GM12878 (cell line): ENCODE measurements at regions of chr7 and their contacts with region 1.

Region 1: DNA sequence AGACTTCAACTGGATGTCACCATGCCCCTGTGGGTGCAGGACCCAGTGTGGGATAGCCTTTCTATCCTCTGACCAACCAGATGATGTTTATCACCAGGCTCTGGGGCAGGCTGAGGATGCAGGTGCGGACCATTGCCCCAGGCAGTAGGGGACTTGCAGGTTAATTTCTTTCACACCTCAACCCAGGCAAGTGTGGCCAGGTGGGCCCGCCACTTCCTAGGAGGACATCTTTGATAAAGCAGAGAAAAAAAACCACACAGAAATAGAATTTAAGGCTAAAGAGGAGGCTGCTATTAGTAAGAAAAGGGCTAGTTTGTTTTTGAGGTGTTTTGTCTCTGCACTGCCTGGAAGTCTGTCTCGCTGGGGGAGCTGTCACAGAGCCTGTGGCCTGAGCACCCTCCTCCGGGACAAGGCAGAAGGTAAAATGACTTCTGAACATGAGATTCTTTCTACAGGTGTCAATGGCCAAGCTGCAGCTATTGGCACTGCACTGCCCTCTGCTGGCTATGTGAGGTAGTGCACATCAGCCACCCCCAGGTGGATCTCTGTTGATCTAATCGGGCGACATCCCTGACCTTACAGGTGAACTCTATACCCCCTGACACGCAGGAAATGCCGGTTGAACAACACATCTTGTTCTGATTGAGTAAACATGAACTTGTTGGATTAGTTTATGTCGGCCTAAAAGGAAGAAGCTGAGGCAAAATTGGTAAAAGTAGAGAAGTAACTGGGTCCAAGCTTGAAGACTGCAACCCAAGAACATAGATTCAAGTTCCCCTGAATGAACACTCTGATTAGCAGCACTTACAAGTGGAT is 21.0 kb downstream of the UPP1 start:
- DNase-seq: peak; percentile 46
- ATAC-seq: peak; percentile 97
- H3K4me3 ChIP-seq: no peak overlapping the region
- H3K27ac ChIP-seq: no peak overlapping the region
- H3K4me1 ChIP-seq: no peaks in the 10 kb centered on the region
- H3K27me3 ChIP-seq: no peaks in the 10 kb centered on the region
- CTCF ChIP-seq: peak; percentile 96 to 99 (median 98)
- EP300 ChIP-seq: no peak
- POLR2A ChIP-seq: no peak
- RAD21 ChIP-seq: peak; percentile 99

Region 2: DNA sequence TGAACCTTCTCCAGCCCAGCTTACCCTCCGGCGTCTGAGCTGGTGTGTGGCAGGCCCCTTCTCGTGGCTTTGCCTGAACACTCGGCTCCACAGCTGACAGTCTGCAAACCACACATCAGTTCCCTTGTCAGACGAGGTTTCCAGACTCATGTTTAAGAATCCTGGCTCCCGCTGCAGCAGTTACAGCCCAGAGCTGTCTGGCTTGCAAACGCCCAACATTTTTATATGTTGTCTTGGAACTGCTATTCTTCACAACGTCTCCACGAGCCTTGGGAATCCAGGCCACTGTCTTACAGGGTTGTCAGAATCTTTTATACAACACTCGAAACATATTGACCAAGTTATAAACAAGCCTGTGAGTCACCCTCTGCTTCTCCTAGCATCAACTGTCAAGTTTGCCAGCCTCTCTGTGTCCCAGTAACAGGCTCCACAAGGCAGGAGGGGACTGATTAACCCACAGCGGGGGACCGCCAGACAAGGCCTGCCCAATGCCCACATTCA is 596.3 kb before region 1 on chr7:
- CTCF ChIA-PET with region 1: no interaction called
- POLR2A ChIA-PET with region 1: no interaction called
- RAD21 ChIA-PET with region 1: no interaction called
- SMC1A ChIA-PET with region 1: no interaction called
- in situ Hi-C with region 1: no loop called
- intact Hi-C with region 1: no loop called
- DNase-seq: no peak
- ATAC-seq: no peak
- H3K4me3 ChIP-seq: no peak overlapping the region
- H3K27ac ChIP-seq: no peak overlapping the region
- H3K4me1 ChIP-seq: no peaks in the 10 kb centered on the region
- H3K27me3 ChIP-seq: no peaks in the 10 kb centered on the region; a peak in 1 of 4 replicates
- CTCF ChIP-seq: no peak
- EP300 ChIP-seq: no peak
- POLR2A ChIP-seq: no peak
- RAD21 ChIP-seq: no peak

Region 3: DNA sequence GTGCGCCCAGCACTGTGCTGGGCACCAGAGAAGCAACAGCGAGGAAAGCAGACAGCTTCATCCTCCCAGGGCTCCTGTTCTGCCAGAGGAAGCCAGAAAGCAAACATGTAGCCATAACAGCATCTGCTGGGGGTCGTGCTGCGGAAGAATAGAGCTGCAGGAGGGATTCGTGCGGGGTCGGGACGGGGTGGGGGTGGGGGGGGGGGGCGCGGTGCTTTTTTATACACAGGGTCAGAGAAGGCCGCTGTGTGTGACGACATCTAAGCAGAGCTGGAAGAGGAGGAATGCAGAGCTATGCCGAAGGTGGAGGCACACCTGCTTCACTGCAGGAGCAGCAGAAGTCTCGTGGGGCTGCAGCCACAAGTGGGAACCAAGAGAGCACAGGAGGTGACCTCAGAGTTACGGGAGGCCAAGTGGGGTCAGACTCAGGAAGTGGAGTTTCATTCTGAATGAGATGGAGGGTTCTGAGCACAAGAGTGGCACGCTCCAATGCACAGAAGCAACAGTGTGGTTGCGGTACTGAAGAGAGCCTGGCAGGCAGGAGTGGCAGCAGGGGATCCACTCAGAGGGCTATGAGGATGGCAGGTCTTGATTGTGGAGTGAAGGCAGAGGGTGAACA is 172.9 kb before region 1 on chr7:
- CTCF ChIA-PET with region 1: interaction called, 8 read pairs
- POLR2A ChIA-PET with region 1: no interaction called
- RAD21 ChIA-PET with region 1: interaction called, 3 read pairs
- SMC1A ChIA-PET with region 1: interaction called, 5 read pairs
- in situ Hi-C with region 1: loop called (anchors 5 kb)
- intact Hi-C with region 1: no loop called
- DNase-seq: peak; percentile 91
- ATAC-seq: peak; percentile 98
- H3K4me3 ChIP-seq: peak overlapping the region; percentile 9; the same call in 1 of the 2 replicates
- H3K27ac ChIP-seq: peak overlapping the region; percentile 68
- H3K4me1 ChIP-seq: peaks cover 28% of the 10 kb centered on the region
- H3K27me3 ChIP-seq: peaks cover 0 to 1% of the 10 kb centered on the region in 2 experiments; a peak in 2 of 4 replicates
- CTCF ChIP-seq: no peak
- EP300 ChIP-seq: peak; percentile 94 to 98
- POLR2A ChIP-seq: peak; percentile 58; the same call in 1 of the 2 replicates
- RAD21 ChIP-seq: no peak

Region 4: GRCh38 chr7:47991741-47992311 is 118.2 kb before region 1 on chr7:
- CTCF ChIA-PET with region 1: interaction called, 210 read pairs
- POLR2A ChIA-PET with region 1: interaction called, 7 read pairs
- RAD21 ChIA-PET with region 1: interaction called, 79 read pairs
- SMC1A ChIA-PET with region 1: interaction called, 41 read pairs
- in situ Hi-C with region 1: loop called (anchors 5 kb)
- intact Hi-C with region 1: loop called (anchors 1 kb)
- DNase-seq: peak; percentile 39
- ATAC-seq: peak; percentile 100
- H3K4me3 ChIP-seq: peak overlapping the region; percentile 67; the same call in 1 of the 2 replicates
- H3K27ac ChIP-seq: no peak overlapping the region
- H3K4me1 ChIP-seq: peaks cover 5% of the 10 kb centered on the region; the same call in 1 of the 2 replicates
- H3K27me3 ChIP-seq: no peaks in the 10 kb centered on the region
- CTCF ChIP-seq: peak; percentile 76 to 91 (median 82)
- EP300 ChIP-seq: no peak
- POLR2A ChIP-seq: peak; percentile 72
- RAD21 ChIP-seq: peak; percentile 80

Region 5: DNA sequence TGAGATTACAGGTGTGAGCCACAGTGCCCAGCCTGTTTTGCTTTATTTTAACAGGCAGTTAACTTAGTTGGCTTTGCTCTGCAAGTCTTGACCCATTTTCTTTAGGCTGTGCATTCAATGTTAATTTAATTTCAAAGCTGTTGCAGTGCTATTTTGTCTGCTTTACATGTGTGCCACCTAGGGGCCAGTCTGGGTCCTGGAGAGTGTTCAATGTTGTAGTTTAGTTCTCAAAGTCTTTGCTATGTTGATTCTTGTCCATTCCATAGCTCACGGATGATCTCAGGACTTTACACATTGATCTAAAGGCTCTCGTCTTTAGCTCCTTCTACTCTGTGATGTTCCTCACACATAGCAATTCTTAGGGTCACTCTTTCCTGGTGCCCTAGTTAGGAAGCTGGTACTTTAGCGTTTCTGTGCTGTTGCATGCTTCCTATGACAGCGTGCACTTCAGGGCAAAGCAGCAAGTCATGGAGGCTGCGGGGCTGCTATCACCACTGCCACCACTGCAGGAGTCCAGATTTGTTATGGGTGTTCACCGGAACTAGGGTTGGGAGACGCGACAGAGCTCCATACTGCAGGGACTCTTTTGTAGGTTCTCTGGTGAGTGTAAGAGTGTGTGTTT is 44.8 kb after region 1 on chr7:
- CTCF ChIA-PET with region 1: interaction called, 4 read pairs
- POLR2A ChIA-PET with region 1: no interaction called
- RAD21 ChIA-PET with region 1: interaction called, 5 read pairs
- SMC1A ChIA-PET with region 1: no interaction called
- in situ Hi-C with region 1: no loop called
- intact Hi-C with region 1: loop called (anchors 2 kb)
- DNase-seq: no peak
- ATAC-seq: peak; percentile 87
- H3K4me3 ChIP-seq: no peak overlapping the region
- H3K27ac ChIP-seq: no peak overlapping the region
- H3K4me1 ChIP-seq: no peaks in the 10 kb centered on the region
- H3K27me3 ChIP-seq: no peaks in the 10 kb centered on the region; a peak in 2 of 4 replicates
- CTCF ChIP-seq: peak; percentile 56 to 63 (median 61); a peak in 5 of 6 replicates
- EP300 ChIP-seq: no peak
- POLR2A ChIP-seq: no peak
- RAD21 ChIP-seq: peak; percentile 75

Region 6: DNA sequence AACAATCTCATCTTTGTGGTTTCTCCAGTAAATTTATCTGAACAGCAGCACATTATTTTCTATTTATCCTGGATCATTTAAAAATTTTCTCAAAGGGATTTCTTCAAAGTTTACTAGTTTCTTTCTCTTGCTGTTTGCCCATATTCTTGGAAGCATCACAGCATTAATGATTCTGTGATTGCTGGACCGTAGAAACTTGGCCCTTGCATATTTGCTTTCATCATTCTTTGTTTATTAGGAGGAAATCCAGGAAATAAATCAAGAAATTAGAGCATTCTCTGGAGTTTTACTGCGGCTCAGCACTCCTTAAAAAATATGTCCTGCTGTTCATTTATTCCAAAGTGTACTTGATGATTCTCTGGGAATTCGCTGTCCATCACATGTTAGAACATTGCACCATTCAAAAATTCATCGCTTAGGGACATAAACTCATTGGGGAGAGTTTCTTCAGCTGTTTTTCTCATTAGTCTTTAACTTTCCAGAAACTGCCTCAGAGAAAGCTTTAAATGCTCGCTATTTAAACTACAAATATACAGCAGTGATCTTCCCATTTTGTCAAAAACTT is 550.3 kb after region 1 on chr7:
- CTCF ChIA-PET with region 1: no interaction called
- POLR2A ChIA-PET with region 1: no interaction called
- RAD21 ChIA-PET with region 1: no interaction called
- SMC1A ChIA-PET with region 1: no interaction called
- in situ Hi-C with region 1: no loop called
- intact Hi-C with region 1: no loop called
- DNase-seq: no peak
- ATAC-seq: no peak
- H3K4me3 ChIP-seq: no peak overlapping the region
- H3K27ac ChIP-seq: no peak overlapping the region
- H3K4me1 ChIP-seq: no peaks in the 10 kb centered on the region
- H3K27me3 ChIP-seq: no peaks in the 10 kb centered on the region
- CTCF ChIP-seq: no peak
- EP300 ChIP-seq: no peak
- POLR2A ChIP-seq: no peak
- RAD21 ChIP-seq: no peak